ENCODE measurements at regions of chr15 and their contacts with region 1.

Region 1: GRCh38 chr15:58957101-58957973 is 23.9 kb upstream of the SLTM start:
- DNase-seq: peak; percentile 72
- ATAC-seq: peak; percentile 97
- H3K4me3 Mint-ChIP-seq: no peak overlapping the region
- H3K27ac Mint-ChIP-seq: no peak overlapping the region
- H3K4me1 Mint-ChIP-seq: peaks cover 9% of the 10 kb centered on the region
- H3K27me3 Mint-ChIP-seq: no peaks in the 10 kb centered on the region
- CTCF ChIP-seq: peak; percentile 86

Region 2: GRCh38 chr15:58980351-58980939 is 23.1 kb after region 1 on chr15:
- CTCF ChIA-PET with region 1: interaction called, 20 read pairs
- POLR2A ChIA-PET with region 1: no interaction called
- intact Hi-C with region 1: no loop called
- DNase-seq: no peak
- ATAC-seq: no peak
- H3K4me3 Mint-ChIP-seq: no peak overlapping the region
- H3K27ac Mint-ChIP-seq: no peak overlapping the region
- H3K4me1 Mint-ChIP-seq: peaks cover 40% of the 10 kb centered on the region
- H3K27me3 Mint-ChIP-seq: no peaks in the 10 kb centered on the region
- CTCF ChIP-seq: peak; percentile 82

Region 3: GRCh38 chr15:58994906-58995453 is 37.6 kb after region 1 on chr15:
- CTCF ChIA-PET with region 1: no interaction called
- POLR2A ChIA-PET with region 1: no interaction called
- intact Hi-C with region 1: no loop called
- DNase-seq: no peak
- ATAC-seq: no peak
- H3K4me3 Mint-ChIP-seq: no peak overlapping the region
- H3K27ac Mint-ChIP-seq: no peak overlapping the region
- H3K4me1 Mint-ChIP-seq: peaks cover 49% of the 10 kb centered on the region
- H3K27me3 Mint-ChIP-seq: no peaks in the 10 kb centered on the region
- CTCF ChIP-seq: no peak